ENCODE measurements at regions of chr2 and their contacts with region 1.

Region 1: GRCh38 chr2:64283641-64284361 is 139.6 kb upstream of the PELI1 start:
- DNase-seq: no peak
- H3K4me3 ChIP-seq: peak overlapping the region in 3 of 4 donors; percentile 15 to 21 (median 18)
- H3K27ac ChIP-seq: peak overlapping the region; percentile 29 to 74 (median 64)
- H3K4me1 ChIP-seq: peaks cover 0 to 49% (median 39%) of the 10 kb centered on the region in 4 donors
- H3K27me3 ChIP-seq: no peaks in the 10 kb centered on the region
- CTCF ChIP-seq: no peak
- EP300 ChIP-seq: peak in 1 of 4 donors; percentile 56
- POLR2A ChIP-seq: no peak

Region 2: GRCh38 chr2:64052468-64053241 is 231.1 kb before region 1 on chr2:
- intact Hi-C with region 1: no loop called
- DNase-seq: no peak
- H3K4me3 ChIP-seq: no peak overlapping the region
- H3K27ac ChIP-seq: peak overlapping the region in 1 of 4 donors; percentile 14
- H3K4me1 ChIP-seq: no peaks in the 10 kb centered on the region
- H3K27me3 ChIP-seq: no peaks in the 10 kb centered on the region
- CTCF ChIP-seq: no peak
- EP300 ChIP-seq: no peak
- POLR2A ChIP-seq: no peak

Region 3: GRCh38 chr2:64101141-64101591 is 182.6 kb before region 1 on chr2:
- intact Hi-C with region 1: no loop called
- DNase-seq: no peak
- H3K4me3 ChIP-seq: no peak overlapping the region
- H3K27ac ChIP-seq: no peak overlapping the region
- H3K4me1 ChIP-seq: peaks cover 0 to 31% (median 25%) of the 10 kb centered on the region in 4 donors
- H3K27me3 ChIP-seq: no peaks in the 10 kb centered on the region
- CTCF ChIP-seq: no peak
- EP300 ChIP-seq: no peak
- POLR2A ChIP-seq: no peak

Region 4: GRCh38 chr2:64128943-64129391 is 154.8 kb before region 1 on chr2:
- intact Hi-C with region 1: loop called (anchors 5 kb)
- DNase-seq: no peak
- H3K4me3 ChIP-seq: no peak overlapping the region
- H3K27ac ChIP-seq: no peak overlapping the region
- H3K4me1 ChIP-seq: peaks cover 0 to 39% (median 35%) of the 10 kb centered on the region in 4 donors
- H3K27me3 ChIP-seq: no peaks in the 10 kb centered on the region
- CTCF ChIP-seq: no peak
- EP300 ChIP-seq: no peak
- POLR2A ChIP-seq: no peak

Region 5: GRCh38 chr2:64404002-64404731 is 120.4 kb after region 1 on chr2:
- intact Hi-C with region 1: no loop called
- DNase-seq: peak; percentile 90
- H3K4me3 ChIP-seq: no peak overlapping the region
- H3K27ac ChIP-seq: peak overlapping the region; percentile 68 to 75 (median 73)
- H3K4me1 ChIP-seq: peaks cover 0 to 42% (median 23%) of the 10 kb centered on the region in 4 donors
- H3K27me3 ChIP-seq: no peaks in the 10 kb centered on the region
- CTCF ChIP-seq: no peak
- EP300 ChIP-seq: peak in 1 of 4 donors; percentile 11
- POLR2A ChIP-seq: no peak

Measured in sigmoid colon (tissue), 7 donors.